ENCODE measurements at regions of chr10 and their contacts with region 1.

Region 1: DNA sequence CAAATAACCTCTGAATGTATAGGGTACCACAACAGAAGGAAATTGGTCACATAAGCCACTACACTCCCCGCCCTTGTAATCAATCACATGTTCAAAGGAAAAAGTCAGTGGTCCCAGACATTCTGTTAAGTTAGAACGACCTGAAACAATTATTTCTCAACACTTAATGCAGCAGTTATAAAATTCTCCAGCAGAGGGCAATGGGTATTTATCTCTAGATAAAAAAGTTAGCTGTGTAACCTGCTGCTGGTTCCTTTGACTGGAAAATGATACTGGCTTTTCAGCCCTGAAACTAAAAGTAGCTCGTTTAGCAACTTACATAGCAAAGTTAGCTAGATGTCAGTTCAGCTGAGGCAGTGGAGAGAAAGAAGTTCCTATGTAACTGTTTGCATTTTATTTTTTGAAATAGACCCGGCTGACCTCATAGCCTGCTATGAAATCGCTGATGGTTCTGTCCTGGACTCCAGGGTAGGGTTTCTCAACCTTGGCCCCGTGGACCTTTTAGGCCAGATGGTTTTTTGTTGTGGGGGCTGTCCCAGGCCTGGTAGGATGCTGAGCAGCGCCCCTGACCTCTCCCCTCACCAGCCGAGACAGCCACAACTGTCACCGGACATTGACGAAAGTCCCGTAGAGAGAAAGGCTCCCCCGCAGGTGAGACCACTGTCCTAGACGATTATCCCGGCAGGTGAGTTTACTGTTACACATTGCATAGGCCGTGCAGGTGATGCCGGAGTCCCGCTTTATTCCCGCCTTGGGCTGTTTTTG is 40.2 kb upstream of the PROSER2 start:
- DNase-seq: peak in 1 of 2 donors; percentile 57
- ATAC-seq: no peak
- H3K4me3 ChIP-seq: no peak overlapping the region
- H3K27ac ChIP-seq: no peak overlapping the region
- H3K4me1 ChIP-seq: no peaks in the 10 kb centered on the region
- H3K27me3 ChIP-seq: no peaks in the 10 kb centered on the region

Region 2: GRCh38 chr10:11901833-11902475 is 119.0 kb after region 1 on chr10:
- intact Hi-C with region 1: no loop called
- DNase-seq: peak in 1 of 2 donors; percentile 34
- ATAC-seq: no peak
- H3K4me3 ChIP-seq: no peak overlapping the region
- H3K27ac ChIP-seq: no peak overlapping the region
- H3K4me1 ChIP-seq: no peaks in the 10 kb centered on the region
- H3K27me3 ChIP-seq: no peaks in the 10 kb centered on the region

Region 3: GRCh38 chr10:11986593-11987216 is 203.7 kb after region 1 on chr10:
- intact Hi-C with region 1: loop called in 1 of 2 experiments (anchors 10 kb)
- DNase-seq: peak; percentile 79 to 87
- ATAC-seq: no peak
- H3K4me3 ChIP-seq: no peak overlapping the region
- H3K27ac ChIP-seq: no peak overlapping the region
- H3K4me1 ChIP-seq: no peaks in the 10 kb centered on the region
- H3K27me3 ChIP-seq: no peaks in the 10 kb centered on the region

Region 4: DNA sequence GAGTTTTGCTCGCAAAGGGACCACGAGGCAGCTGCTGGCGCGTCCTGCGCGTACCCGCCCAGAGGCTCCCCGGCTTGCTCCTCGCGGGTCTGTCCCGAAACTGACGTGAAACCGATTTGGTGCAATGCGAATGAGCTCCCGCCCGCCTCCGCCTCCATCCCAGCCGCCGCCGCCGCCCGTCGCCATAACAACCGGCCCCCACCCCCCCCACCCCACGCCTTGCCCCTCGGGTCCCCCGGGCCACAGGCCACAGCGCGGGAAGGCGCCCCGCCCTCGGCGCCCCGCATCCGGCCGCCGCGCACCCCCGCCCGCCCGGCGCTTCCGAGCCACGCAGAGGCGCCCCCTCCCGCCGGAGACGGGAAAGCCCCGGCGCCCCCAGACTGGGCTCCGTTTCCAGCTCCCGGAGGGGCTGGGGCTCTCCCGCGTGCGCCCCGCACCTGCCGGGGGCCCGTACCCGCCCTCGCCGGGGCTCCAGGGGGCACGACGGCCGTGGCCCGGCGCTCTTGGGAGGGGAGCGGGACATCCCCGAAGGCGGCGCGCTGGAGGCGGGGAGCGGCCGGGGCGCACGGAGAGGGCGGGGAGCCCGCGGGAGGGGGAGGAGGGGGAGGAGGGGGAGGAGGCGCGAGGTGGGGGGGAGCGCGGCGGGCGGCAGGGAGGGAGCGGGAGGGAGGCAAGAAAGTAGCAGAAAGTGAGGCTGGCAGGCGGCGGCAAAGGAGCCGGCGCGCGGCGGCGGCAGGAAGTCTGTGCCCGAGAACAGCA is 566.1 kb after region 1 on chr10 and contains the start of gene CAMK1D:
- intact Hi-C with region 1: no loop called
- DNase-seq: peak; percentile 91 to 95
- ATAC-seq: peak; percentile 89
- H3K4me3 ChIP-seq: peak within 1 kb of the TSS; percentile 86 to 96
- H3K27ac ChIP-seq: peak within 1 kb of the TSS; percentile 84 to 93
- H3K4me1 ChIP-seq: peaks cover 0 to 3% of the 10 kb centered on the region in 2 donors
- H3K27me3 ChIP-seq: no peaks in the 10 kb centered on the region
- total RNA-seq, gene CAMK1D: 10.9 to 19.0 TPM